ENCODE measurements at regions of chr13 and their contacts with region 1.

Region 1: DNA sequence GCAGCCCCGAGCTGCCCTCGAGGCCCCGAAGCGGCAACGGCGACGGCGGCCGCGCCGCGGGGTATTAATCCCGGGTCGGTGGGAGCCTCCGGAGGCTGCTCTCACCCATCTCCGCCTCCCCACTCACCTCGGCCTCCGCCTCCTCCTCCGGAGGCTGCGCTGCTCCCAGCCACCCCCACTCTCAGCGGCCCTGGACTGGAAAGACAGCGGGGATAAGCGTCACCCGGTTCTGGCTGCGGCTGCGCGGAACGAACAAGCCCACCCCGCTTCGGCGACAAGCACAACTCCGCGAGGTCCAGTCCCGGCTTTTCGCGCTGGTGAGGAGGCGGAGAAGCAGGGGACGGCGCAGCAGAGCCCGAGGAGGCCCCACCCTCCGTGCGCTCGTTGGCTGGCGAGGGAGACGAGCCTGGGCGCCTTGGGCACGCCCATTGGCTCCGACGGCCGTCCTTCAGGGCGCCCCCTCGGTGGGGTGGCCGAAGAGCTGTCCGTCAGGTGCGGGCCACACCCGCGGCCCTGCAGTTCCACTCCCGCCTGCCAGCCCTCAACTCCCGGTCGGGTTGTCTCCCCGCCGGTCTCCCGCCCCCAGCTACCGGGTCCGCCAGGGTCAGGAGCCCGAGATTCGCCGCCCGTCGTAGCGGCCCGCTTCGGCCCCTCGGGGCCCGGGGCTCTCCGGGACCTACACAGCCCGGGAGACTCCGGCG is at the start of gene ZMYM5:
- DNase-seq: peak; percentile 92
- H3K4me3 ChIP-seq: peak within 1 kb of the TSS; percentile 80 to 92 (median 84)
- H3K27ac ChIP-seq: peak within 1 kb of the TSS; percentile 99
- H3K4me1 ChIP-seq: peaks cover 9 to 61% (median 22%) of the 10 kb centered on the region in 3 donors
- H3K27me3 ChIP-seq: no peaks in the 10 kb centered on the region
- CTCF ChIP-seq: no peak
- POLR2A ChIP-seq: peak in 3 of 4 donors; percentile 83 to 96 (median 90)
- total RNA-seq, gene ZMYM5: 7.4 to 16.2 (median 10.0) TPM

Region 2: GRCh38 chr13:18714889-18715288 is 1148.6 kb before region 1 on chr13:
- intact Hi-C with region 1: no loop called
- DNase-seq: no peak
- H3K4me3 ChIP-seq: no peak overlapping the region
- H3K27ac ChIP-seq: no peak overlapping the region
- H3K4me1 ChIP-seq: no peaks in the 10 kb centered on the region
- H3K27me3 ChIP-seq: no peaks in the 10 kb centered on the region
- CTCF ChIP-seq: no peak
- POLR2A ChIP-seq: no peak

Region 3: GRCh38 chr13:19782049-19782726 is 81.3 kb before region 1 on chr13:
- intact Hi-C with region 1: loop called (anchors 5 kb)
- DNase-seq: no peak
- H3K4me3 ChIP-seq: peak overlapping the region; percentile 78 to 98 (median 88)
- H3K27ac ChIP-seq: peak overlapping the region; percentile 91 to 97 (median 95)
- H3K4me1 ChIP-seq: peaks cover 0 to 17% (median 6%) of the 10 kb centered on the region in 3 donors
- H3K27me3 ChIP-seq: no peaks in the 10 kb centered on the region
- CTCF ChIP-seq: no peak
- POLR2A ChIP-seq: no peak

Region 4: GRCh38 chr13:19940106-19940505 is 76.6 kb after region 1 on chr13:
- intact Hi-C with region 1: no loop called
- DNase-seq: no peak
- H3K4me3 ChIP-seq: no peak overlapping the region
- H3K27ac ChIP-seq: no peak overlapping the region
- H3K4me1 ChIP-seq: no peaks in the 10 kb centered on the region
- H3K27me3 ChIP-seq: peaks cover 0 to 3% (median 0%) of the 10 kb centered on the region in 4 donors
- CTCF ChIP-seq: no peak
- POLR2A ChIP-seq: no peak